Activated naive CD4-positive, alpha-beta T cell treated with anti-CD3 and anti-CD28 coated beads for 36 hours (primary cell): ENCODE measurements at regions of chr22 and their contacts with region 1.

Region 1: DNA sequence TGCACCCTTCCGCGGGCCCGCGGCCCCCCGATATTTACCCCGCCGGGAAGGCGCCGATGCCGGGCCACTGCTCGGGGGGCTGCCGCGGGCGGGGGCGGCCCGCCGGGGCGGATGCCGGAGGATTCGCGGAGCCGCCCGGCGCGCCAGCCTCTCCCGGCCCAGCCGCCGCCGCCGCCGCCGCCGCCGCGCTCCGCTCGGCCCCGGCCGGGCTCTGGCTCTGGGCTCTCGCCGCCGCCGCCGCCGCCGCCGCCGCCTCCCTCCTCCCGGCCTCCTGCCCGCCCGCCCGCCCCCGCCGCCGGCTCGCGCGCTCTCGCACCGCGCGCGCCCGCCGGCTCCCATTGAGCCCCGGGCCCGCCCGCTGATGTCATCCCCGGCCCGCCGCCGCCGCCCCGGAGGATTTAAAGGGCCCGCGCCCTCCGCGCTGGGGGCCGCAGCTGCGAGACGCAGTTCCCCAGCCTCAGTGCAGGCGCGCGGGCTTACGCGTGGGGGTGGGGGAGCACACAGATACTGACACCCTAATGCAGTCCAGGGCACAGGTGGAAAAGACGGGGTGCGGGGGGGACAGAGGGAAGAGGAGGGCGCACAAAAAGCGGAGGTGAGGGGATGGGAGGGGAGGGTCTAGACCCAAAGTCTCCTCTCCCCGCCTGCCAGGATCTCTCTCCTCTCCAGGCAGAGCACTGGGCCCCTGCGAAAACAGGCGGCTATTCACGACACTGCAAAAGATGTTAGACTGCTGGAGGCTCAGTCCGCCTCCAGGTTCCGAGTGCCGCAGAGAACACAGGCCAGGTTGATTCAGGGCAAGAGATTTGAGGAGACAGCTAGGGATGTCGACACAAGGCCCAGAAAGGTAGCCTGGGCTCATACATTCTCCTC is at the start of gene CSNK1E:
- DNase-seq: peak; percentile 73
- H3K4me3 Mint-ChIP-seq: peak within 1 kb of the TSS; percentile 90
- H3K27ac Mint-ChIP-seq: peak within 1 kb of the TSS; percentile 86
- H3K4me1 Mint-ChIP-seq: peaks cover 41% of the 10 kb centered on the region
- H3K27me3 Mint-ChIP-seq: no peaks in the 10 kb centered on the region
- total RNA-seq, gene CSNK1E: 105 to 108 TPM

Region 2: GRCh38 chr22:38193580-38193979 is 123.8 kb before region 1 on chr22:
- CTCF ChIA-PET with region 1: no interaction called
- intact Hi-C with region 1: no loop called
- DNase-seq: no peak
- H3K4me3 Mint-ChIP-seq: no peak overlapping the region
- H3K27ac Mint-ChIP-seq: no peak overlapping the region
- H3K4me1 Mint-ChIP-seq: peaks cover 3% of the 10 kb centered on the region
- H3K27me3 Mint-ChIP-seq: peaks cover 1% of the 10 kb centered on the region

Region 3: GRCh38 chr22:38272373-38273134 is 44.8 kb before region 1 on chr22 and contains the start of gene TMEM184B:
- CTCF ChIA-PET with region 1: interaction called, 4 read pairs
- intact Hi-C with region 1: loop called (anchors 1 kb)
- DNase-seq: peak; percentile 74
- H3K4me3 Mint-ChIP-seq: peak within 1 kb of the TSS; percentile 87
- H3K27ac Mint-ChIP-seq: peak within 1 kb of the TSS; percentile 88
- H3K4me1 Mint-ChIP-seq: peaks cover 45% of the 10 kb centered on the region
- H3K27me3 Mint-ChIP-seq: no peaks in the 10 kb centered on the region
- total RNA-seq, gene TMEM184B: 15.0 to 15.3 TPM

Region 4: DNA sequence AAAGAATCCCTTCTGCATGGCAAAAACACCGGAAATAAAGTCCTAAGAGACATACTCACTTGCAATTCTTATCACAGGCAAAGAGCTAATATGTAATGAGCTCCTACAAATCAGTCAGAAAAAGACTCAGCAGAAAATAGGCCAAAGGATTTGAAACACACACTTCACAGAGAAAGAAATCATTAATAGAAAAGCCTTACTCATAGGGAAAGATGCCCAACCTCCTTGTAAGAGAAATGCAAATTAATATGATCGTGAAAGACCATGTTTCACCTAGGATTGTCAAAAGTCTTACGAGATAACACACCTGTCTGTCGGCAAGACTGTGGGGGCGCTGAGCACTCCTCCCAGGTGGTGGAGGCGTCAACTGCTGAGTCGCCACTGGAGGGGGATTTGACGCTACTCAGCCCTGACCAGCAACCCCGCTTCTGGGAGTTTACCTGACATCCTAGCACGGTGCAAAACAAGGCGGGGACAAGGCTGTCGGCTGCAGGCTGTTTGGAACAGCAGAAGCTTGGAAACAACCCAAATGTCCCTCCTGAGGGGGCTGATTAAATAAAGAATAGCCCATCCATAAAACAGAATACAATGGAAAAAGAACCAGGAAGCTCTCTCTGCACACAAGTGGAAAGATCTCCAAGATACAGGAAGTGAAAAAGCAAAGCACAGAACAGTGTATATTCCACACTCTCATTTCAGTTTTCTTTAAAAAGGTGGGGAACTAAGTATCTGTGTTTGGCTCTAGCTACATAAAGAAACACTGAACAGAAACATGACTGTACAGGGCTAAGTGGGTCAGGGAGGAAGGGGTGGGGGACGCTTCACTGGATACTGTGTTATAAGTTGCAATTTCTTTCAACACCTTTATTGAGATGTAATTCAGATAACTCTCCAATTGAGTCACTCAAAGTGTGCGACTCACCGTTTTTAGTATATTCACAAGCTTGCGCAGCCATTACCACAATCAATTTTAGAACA is 11.6 kb before region 1 on chr22:
- CTCF ChIA-PET with region 1: no interaction called
- intact Hi-C with region 1: loop called (anchors 1 kb)
- DNase-seq: peak; percentile 70
- H3K4me3 Mint-ChIP-seq: no peak overlapping the region
- H3K27ac Mint-ChIP-seq: peak overlapping the region; percentile 90
- H3K4me1 Mint-ChIP-seq: peaks cover 37% of the 10 kb centered on the region
- H3K27me3 Mint-ChIP-seq: no peaks in the 10 kb centered on the region